SK-N-SH (cell line): ENCODE measurements at regions of chr15 and their contacts with region 1.

Region 1: DNA sequence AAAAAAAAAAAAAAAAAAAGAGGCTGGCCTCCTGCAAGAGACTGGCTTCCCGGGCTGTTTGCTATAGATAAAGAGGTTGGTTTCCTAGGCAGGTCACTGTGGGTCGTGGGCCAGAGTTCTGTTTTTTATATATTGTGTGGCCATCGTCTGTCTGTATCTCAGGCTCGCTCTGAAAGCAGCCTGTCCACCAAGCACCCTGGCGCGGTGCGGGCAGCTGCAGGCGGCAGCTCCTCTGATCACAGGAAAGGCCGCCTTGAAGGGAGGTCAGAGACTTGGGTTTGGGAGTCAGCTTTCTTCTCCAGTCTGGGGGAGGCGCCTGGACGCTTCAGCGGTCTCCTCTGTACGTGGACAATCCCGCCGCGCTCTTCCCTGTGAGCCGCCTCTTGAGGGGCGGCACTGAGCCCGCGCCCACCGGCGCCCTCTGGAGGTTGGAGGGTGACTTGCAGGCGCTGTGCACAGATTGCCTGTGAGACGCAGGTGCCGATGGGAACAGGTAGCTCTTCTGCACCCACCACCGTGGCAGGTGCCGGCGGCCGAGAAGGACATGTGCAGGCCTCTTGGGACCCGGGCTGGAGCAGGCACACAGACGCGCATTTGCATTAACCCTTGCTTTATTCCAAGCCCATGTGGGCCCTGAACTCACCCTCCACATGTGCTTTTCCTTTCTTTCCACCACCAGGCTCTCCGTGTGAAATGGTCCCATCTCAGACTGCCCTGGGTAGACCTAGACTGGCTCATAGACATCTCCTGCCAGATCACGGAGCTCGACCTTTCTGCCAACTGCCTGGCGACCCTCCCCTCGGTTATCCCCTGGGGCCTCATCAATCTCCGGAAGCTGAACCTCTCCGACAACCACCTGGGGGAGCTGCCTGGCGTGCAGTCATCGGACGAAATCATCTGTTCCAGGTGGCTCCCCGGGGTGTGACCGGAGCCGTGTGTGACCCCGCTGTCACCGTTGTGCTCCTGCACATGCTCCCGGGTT is 89.3 kb downstream of the LRRK1 start:
- DNase-seq: peak; percentile 89
- H3K4me3 ChIP-seq: peak overlapping the region; percentile 43 to 59
- H3K27ac ChIP-seq: no peak overlapping the region; a peak in 1 of 4 replicates
- H3K4me1 ChIP-seq: peaks cover 0 to 4% of the 10 kb centered on the region in 2 experiments; a peak in 1 of 4 replicates
- H3K27me3 ChIP-seq: no peaks in the 10 kb centered on the region
- CTCF ChIP-seq: peak; percentile 92
- EP300 ChIP-seq: no peak
- RAD21 ChIP-seq: peak; percentile 60

Region 2: GRCh38 chr15:100612539-100612938 is 395.9 kb before region 1 on chr15:
- CTCF ChIA-PET with region 1: interaction called, 31 read pairs
- POLR2A ChIA-PET with region 1: no interaction called
- DNase-seq: no peak
- H3K4me3 ChIP-seq: no peak overlapping the region
- H3K27ac ChIP-seq: no peak overlapping the region
- H3K4me1 ChIP-seq: no peaks in the 10 kb centered on the region
- H3K27me3 ChIP-seq: no peaks in the 10 kb centered on the region
- CTCF ChIP-seq: no peak
- EP300 ChIP-seq: no peak
- RAD21 ChIP-seq: no peak

Region 3: DNA sequence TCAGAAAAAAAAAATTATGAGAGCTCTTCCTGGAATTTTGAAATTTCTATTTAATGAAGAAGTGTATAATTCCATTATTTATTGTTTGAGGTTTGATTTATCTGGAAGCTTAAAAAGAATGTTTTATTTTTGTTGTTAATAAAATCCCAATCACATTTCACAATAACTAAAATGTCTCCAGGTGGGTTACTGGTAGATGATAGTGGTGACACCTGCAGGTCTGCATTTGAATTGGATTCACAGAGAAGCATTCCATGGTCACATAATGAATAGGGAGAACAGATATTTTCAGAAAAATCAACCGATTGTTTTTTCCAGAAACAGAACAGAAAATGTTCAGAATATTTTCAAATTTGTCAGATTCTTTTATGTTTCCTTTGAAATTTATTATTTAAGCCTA is 357.8 kb before region 1 on chr15:
- CTCF ChIA-PET with region 1: interaction called, 17 read pairs
- POLR2A ChIA-PET with region 1: no interaction called
- DNase-seq: no peak
- H3K4me3 ChIP-seq: no peak overlapping the region
- H3K27ac ChIP-seq: no peak overlapping the region
- H3K4me1 ChIP-seq: no peaks in the 10 kb centered on the region
- H3K27me3 ChIP-seq: no peaks in the 10 kb centered on the region
- CTCF ChIP-seq: peak; percentile 27
- EP300 ChIP-seq: no peak
- RAD21 ChIP-seq: peak; percentile 17; the same call in 1 of the 2 replicates

Region 4: DNA sequence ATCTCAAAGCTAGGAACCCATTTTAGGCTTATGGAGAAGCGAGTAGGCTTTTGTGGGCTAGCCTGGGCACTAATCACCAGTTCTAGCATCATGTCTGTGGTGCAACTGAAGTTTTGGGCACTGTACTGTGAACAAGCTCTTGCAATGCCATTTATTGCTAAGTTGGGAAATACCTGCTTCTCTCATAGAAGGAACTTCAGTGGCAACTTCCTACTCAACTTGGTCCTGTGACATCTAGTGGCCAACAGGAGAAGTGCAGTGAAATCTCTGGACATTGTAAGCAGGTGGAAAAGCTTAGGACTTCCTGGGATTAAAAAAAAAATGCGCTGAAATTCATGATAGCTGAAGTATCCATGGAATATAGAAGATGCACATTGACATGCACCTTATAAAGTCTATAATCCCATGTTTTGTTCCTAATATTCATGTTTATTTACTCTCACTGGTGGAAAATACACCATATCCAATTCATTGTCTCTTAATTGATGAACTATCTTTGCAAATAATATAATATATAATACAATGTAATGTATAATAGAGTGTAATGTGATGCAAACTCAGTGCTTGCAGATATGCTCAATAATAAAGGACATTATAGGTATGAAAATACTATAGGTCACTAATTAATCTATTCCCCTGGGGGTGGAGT is 135.3 kb before region 1 on chr15:
- CTCF ChIA-PET with region 1: interaction called, 45 read pairs
- POLR2A ChIA-PET with region 1: no interaction called
- DNase-seq: peak; percentile 76
- H3K4me3 ChIP-seq: peak overlapping the region in 1 of 2 experiments; percentile 36; a peak in 1 of 4 replicates
- H3K27ac ChIP-seq: no peak overlapping the region; a peak in 1 of 4 replicates
- H3K4me1 ChIP-seq: peaks cover 0 to 12% of the 10 kb centered on the region in 2 experiments; a peak in 1 of 4 replicates
- H3K27me3 ChIP-seq: no peaks in the 10 kb centered on the region
- CTCF ChIP-seq: peak; percentile 91
- EP300 ChIP-seq: no peak
- RAD21 ChIP-seq: peak; percentile 83

Region 5: GRCh38 chr15:100929641-100930042 is 78.8 kb before region 1 on chr15:
- CTCF ChIA-PET with region 1: interaction called, 33 read pairs
- POLR2A ChIA-PET with region 1: no interaction called
- DNase-seq: no peak
- H3K4me3 ChIP-seq: no peak overlapping the region
- H3K27ac ChIP-seq: peak overlapping the region in 1 of 2 experiments; percentile 43; a peak in 1 of 4 replicates
- H3K4me1 ChIP-seq: peaks cover 0 to 10% of the 10 kb centered on the region in 2 experiments; a peak in 2 of 4 replicates
- H3K27me3 ChIP-seq: no peaks in the 10 kb centered on the region
- CTCF ChIP-seq: no peak
- EP300 ChIP-seq: no peak
- RAD21 ChIP-seq: no peak

Region 6: DNA sequence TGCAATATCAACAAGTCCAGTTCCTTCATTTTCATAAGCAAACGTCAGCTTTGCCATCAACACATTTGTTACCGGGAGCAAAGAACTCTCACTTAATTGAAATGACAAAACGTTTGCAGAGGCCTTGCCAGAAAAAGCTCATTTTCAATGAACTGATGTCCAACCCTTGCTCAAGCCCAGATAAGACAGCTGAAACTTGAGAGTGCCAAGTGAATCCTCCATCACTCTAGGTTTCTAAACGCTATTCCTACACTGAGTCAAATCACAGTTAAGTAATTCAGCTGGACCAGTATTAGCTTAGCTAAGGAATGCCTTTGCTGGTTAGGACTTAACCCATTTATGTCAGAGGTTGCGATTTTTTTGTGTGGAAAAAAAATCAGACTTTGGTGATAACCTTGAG is 231.9 kb after region 1 on chr15:
- CTCF ChIA-PET with region 1: interaction called, 15 read pairs
- POLR2A ChIA-PET with region 1: no interaction called
- DNase-seq: no peak
- H3K4me3 ChIP-seq: no peak overlapping the region
- H3K27ac ChIP-seq: no peak overlapping the region; a peak in 1 of 4 replicates
- H3K4me1 ChIP-seq: peaks cover 15 to 23% of the 10 kb centered on the region in 2 experiments; a peak in 1 of 4 replicates
- H3K27me3 ChIP-seq: no peaks in the 10 kb centered on the region
- CTCF ChIP-seq: no peak
- EP300 ChIP-seq: no peak
- RAD21 ChIP-seq: no peak

Region 7: GRCh38 chr15:101277038-101277882 is 268.8 kb after region 1 on chr15 and contains the start of gene SELENOS:
- CTCF ChIA-PET with region 1: interaction called, 13 read pairs
- POLR2A ChIA-PET with region 1: no interaction called
- DNase-seq: peak; percentile 97
- H3K4me3 ChIP-seq: peak within 1 kb of the TSS; percentile 91 to 97
- H3K27ac ChIP-seq: peak within 1 kb of the TSS; percentile 75 to 86
- H3K4me1 ChIP-seq: peaks cover 3 to 32% of the 10 kb centered on the region in 2 experiments; a peak in 2 of 4 replicates
- H3K27me3 ChIP-seq: no peaks in the 10 kb centered on the region
- CTCF ChIP-seq: no peak
- EP300 ChIP-seq: peak in 1 of 2 experiments; percentile 43; a peak in 1 of 4 replicates
- RAD21 ChIP-seq: no peak
- polyA plus RNA-seq, gene SELENOS: 101 and 124 TPM in 2 replicates